A549 (cell line): ENCODE measurements at regions of chr12 and their contacts with region 1.

Region 1: GRCh38 chr12:64890873-64891468 is 66.5 kb downstream of the TBC1D30 start:
- DNase-seq: peak; percentile 44 to 62
- ATAC-seq: peak; percentile 68 to 87; a peak in 4 of 6 replicates
- H3K4me3 ChIP-seq: no peak overlapping the region
- H3K27ac ChIP-seq: no peak overlapping the region
- H3K4me1 ChIP-seq: no peaks in the 10 kb centered on the region
- CTCF ChIP-seq: peak; percentile 84
- EP300 ChIP-seq: no peak
- POLR2A ChIP-seq: no peak
- RAD21 ChIP-seq: peak; percentile 92 to 93

Region 2: DNA sequence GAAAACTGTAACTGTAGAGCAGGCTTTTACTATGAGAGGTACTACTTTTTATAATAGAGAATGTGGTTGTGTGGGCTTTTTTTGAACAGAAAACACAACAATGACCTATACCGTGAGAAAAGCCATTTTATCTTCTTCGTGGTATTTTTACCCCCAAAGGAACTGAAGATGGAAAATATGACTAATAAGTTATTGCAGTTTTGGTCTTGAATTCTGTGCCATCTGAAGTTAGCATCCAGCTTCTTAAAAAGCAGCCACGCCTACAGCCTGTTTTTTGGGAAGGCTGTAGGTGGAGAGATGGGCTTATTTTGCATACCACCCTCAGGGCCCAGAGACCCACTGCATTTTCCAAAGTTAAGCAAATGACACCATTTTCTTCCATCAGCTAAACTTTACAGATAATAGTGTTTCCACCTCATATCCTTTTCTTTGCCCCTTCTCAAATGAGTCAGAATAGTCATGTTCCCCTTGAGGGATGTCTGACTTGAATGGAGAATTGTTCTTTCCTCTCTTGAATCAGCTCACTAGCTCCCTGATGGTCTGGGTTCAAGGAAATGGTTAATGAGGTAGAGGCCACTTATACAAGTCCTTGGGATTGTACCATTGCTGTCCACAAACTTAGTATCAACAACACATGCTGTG is 13.5 kb before region 1 on chr12:
- CTCF ChIA-PET with region 1: interaction called, 44 read pairs
- POLR2A ChIA-PET with region 1: no interaction called
- DNase-seq: no peak
- ATAC-seq: no peak
- H3K4me3 ChIP-seq: no peak overlapping the region
- H3K27ac ChIP-seq: no peak overlapping the region
- H3K4me1 ChIP-seq: no peaks in the 10 kb centered on the region
- CTCF ChIP-seq: no peak
- EP300 ChIP-seq: no peak
- POLR2A ChIP-seq: no peak
- RAD21 ChIP-seq: no peak

Region 3: GRCh38 chr12:65121049-65121955 is 230.3 kb after region 1 on chr12 and contains the start of gene WIF1:
- CTCF ChIA-PET with region 1: interaction called, 34 read pairs
- POLR2A ChIA-PET with region 1: no interaction called
- DNase-seq: peak in 1 of 2 experiments; percentile 29
- ATAC-seq: peak; percentile 83 to 92
- H3K4me3 ChIP-seq: peak within 1 kb of the TSS; percentile 40
- H3K27ac ChIP-seq: 0 out of 6 replicates have a peak within 1 kb of the TSS, but pooled peaks of 1 of the 2 experiments have one; percentile 19
- H3K4me1 ChIP-seq: no peaks in the 10 kb centered on the region; the same call in 2 of the 3 replicates
- CTCF ChIP-seq: peak; percentile 43; the same call in 2 of the 3 replicates
- EP300 ChIP-seq: no peak
- POLR2A ChIP-seq: no peak
- RAD21 ChIP-seq: no peak
- polyA plus RNA-seq, gene WIF1: not detected in 2 replicates

Region 4: DNA sequence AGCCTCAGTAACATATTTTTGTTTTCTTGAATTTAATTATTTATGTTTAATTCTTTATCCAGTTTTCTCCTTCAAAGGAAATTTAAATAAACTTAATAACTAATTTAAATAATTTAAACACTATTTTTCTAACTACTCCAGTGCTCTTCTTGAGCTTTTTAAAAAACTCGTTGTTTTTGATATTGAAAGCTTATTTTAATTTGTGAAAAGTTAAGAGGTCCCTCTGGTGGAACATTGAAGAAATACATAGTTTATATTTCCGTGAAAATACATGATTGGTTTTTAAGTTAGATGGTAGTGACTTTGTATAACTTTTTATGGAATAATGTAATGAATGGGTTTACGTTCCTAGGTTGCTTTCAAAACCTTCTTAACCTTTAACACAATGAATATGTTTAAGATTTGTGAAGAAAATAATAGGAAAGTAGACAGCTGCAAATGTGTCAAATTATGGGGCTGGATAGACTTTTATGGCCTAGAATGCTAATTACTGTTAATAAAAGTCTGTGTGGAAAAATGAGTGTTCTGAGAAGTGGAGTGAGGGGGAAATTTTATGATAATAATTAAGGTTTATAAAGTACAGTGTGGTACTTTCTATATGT is 341.6 kb after region 1 on chr12:
- CTCF ChIA-PET with region 1: interaction called, 16 read pairs
- POLR2A ChIA-PET with region 1: no interaction called
- DNase-seq: peak; percentile 13 to 22
- ATAC-seq: 0 out of 6 replicates have a peak, but pooled peaks of 1 of the 2 experiments have one; percentile 25
- H3K4me3 ChIP-seq: no peak overlapping the region
- H3K27ac ChIP-seq: no peak overlapping the region
- H3K4me1 ChIP-seq: 0 out of 3 replicates have a peak, but pooled peaks cover 3% of the 10 kb centered on the region
- CTCF ChIP-seq: peak; percentile 47; the same call in 2 of the 3 replicates
- EP300 ChIP-seq: no peak
- POLR2A ChIP-seq: no peak
- RAD21 ChIP-seq: peak; percentile 37 to 54; a peak in 4 of 5 replicates